Caco-2 (cell line): ENCODE measurements at regions of chr9 and their contacts with region 1.

Region 1: DNA sequence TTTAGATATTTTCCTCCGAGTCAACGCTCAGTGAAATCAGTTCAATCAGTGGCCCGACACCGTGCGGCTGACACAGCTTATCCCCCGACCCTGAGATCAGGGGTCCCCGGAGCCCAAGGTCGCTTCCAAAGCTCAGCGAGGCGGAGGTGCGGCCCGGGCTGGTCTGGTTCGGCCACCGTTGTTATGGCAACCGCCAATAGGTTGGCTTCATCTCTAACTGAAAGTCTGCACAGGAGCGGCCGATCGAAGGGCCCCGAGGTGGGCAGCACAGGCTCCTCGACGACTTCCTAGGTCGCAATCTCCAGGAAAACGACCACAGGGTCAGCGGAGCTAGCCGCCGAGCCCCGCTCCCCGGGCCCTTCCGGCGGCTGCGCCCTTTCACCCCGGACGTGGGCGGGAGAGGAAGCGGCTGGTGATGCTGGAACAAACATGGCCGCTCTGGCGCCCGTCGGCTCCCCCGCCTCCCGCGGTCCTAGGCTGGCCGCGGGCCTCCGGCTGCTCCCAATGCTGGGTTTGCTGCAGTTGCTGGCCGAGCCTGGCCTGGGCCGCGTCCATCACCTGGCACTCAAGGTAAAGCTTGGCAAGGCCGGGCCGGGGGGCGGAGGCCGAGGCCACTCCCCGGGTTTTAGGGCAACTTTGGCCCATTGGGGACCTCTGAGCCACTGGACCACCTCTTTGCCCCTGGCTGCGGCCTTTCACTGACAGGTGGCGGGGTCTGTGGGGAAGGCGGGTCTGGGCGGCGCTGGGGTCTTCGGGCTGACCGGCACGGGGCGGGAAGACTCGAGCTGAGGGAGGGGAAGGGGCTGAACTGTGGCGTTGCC is at the start of gene GPR107:
- DNase-seq: peak; percentile 76 to 84
- H3K4me3 ChIP-seq: peak within 1 kb of the TSS; percentile 75
- H3K4me3 Mint-ChIP-seq: peak within 1 kb of the TSS; percentile 99
- H3K27ac Mint-ChIP-seq: peak within 1 kb of the TSS; percentile 96
- H3K4me1 ChIP-seq: 0 out of 2 replicates have a peak, but pooled peaks cover 3% of the 10 kb centered on the region
- H3K4me1 Mint-ChIP-seq: no peaks in the 10 kb centered on the region
- H3K27me3 ChIP-seq: no peaks in the 10 kb centered on the region
- H3K27me3 Mint-ChIP-seq: no peaks in the 10 kb centered on the region
- CTCF ChIP-seq: no peak
- total RNA-seq, gene GPR107: 49.8 and 53.1 TPM in 2 replicates

Region 2: GRCh38 chr9:129796029-129796910 is 257.4 kb before region 1 on chr9:
- CTCF ChIA-PET with region 1: no interaction called
- POLR2A ChIA-PET with region 1: no interaction called
- intact Hi-C with region 1: no loop called
- DNase-seq: no peak
- H3K4me3 ChIP-seq: no peak overlapping the region
- H3K4me3 Mint-ChIP-seq: no peak overlapping the region
- H3K27ac Mint-ChIP-seq: no peak overlapping the region
- H3K4me1 ChIP-seq: no peaks in the 10 kb centered on the region
- H3K4me1 Mint-ChIP-seq: peaks cover 5% of the 10 kb centered on the region
- H3K27me3 ChIP-seq: no peaks in the 10 kb centered on the region
- H3K27me3 Mint-ChIP-seq: peaks cover 2% of the 10 kb centered on the region
- CTCF ChIP-seq: no peak

Region 3: DNA sequence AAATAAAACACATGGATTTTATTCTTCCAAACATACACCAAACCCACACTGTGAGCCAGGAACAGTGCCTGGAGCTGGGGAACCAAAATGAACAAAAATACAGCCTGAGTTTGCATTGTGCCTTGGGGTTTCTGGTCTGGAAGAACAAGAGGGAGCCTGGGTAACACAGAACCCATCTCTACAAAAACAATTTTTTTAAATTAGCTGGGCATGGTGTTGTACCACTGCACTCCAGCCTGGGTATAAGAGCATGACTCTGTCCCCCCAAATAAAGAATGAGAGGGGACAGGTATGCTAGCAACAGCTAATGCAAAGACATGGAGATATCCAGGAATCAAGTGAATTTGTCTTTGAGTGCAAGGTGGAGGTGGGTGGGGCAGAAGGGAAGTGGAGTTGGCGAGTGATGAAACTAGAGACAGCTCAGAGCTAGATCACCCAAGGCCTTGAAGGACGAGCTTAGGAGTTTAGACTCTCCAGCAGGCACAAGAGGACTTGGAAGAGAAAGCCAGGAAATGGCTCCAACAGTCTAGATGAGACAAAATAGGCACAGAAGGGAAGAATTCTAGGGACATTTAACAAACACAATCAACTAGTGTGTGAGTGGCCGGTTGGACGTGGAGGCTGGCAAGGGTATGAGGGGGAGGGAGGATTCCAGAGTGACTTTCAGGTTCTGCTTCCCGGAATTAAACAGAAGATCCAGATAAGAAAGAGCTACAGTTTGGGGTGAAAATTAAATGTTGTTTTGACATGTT is 58.1 kb before region 1 on chr9:
- CTCF ChIA-PET with region 1: no interaction called
- POLR2A ChIA-PET with region 1: no interaction called
- intact Hi-C with region 1: no loop called
- DNase-seq: no peak
- H3K4me3 ChIP-seq: no peak overlapping the region
- H3K4me3 Mint-ChIP-seq: no peak overlapping the region
- H3K27ac Mint-ChIP-seq: no peak overlapping the region
- H3K4me1 ChIP-seq: no peaks in the 10 kb centered on the region
- H3K4me1 Mint-ChIP-seq: peaks cover 14% of the 10 kb centered on the region
- H3K27me3 ChIP-seq: no peaks in the 10 kb centered on the region
- H3K27me3 Mint-ChIP-seq: no peaks in the 10 kb centered on the region
- CTCF ChIP-seq: no peak

Region 4: DNA sequence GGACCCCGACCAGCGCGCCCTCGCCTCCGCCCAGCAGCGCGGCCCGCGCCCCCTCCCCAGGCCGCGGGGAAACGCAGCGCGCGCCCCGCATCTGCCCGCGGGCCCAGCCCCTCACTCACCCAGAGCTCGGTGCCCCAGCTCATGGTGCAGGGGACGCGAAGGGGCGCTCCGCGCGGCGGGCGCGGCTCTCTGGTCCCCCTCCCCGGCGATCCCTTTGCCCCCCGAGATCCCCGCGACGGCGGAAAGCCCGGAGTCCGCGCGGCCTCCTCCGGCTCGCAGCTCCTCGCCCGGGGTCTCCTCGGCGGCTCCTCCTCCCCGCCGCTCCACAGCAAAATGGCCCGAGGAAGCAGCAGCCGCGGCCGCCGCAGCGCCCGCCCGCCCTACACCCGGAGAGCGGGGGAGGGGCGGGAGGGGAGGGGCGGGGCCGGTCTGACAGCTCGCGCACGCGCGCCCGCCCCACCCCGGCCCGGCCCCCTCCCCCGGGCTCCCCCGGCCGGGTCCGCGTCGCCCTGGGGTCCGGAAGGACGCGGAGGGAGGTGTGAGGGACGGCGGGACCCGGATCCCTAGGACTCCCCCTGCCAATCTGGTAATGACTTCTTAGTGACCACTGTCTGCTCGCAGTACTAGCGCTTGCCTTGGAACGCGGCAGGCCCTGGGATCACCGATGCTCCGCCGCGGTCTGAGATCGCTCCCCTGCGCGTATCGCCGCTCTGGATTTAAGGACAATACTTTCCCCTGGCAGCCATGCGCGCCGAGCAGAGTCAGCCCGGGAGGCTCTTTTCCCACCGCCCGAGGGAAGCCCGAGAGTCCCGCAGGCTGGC is 10.7 kb before region 1 on chr9 and contains the start of gene FNBP1:
- CTCF ChIA-PET with region 1: no interaction called
- POLR2A ChIA-PET with region 1: interaction called, 9 read pairs
- intact Hi-C with region 1: loop called (anchors 1 kb)
- DNase-seq: peak; percentile 82 to 86
- H3K4me3 ChIP-seq: peak within 1 kb of the TSS; percentile 87
- H3K4me3 Mint-ChIP-seq: peak within 1 kb of the TSS; percentile 99
- H3K27ac Mint-ChIP-seq: peak within 1 kb of the TSS; percentile 91
- H3K4me1 ChIP-seq: peaks cover 12% of the 10 kb centered on the region
- H3K4me1 Mint-ChIP-seq: peaks cover 13% of the 10 kb centered on the region
- H3K27me3 ChIP-seq: no peaks in the 10 kb centered on the region
- H3K27me3 Mint-ChIP-seq: no peaks in the 10 kb centered on the region
- CTCF ChIP-seq: no peak
- total RNA-seq, gene FNBP1: 33.2 and 34.3 TPM in 2 replicates

Region 5: DNA sequence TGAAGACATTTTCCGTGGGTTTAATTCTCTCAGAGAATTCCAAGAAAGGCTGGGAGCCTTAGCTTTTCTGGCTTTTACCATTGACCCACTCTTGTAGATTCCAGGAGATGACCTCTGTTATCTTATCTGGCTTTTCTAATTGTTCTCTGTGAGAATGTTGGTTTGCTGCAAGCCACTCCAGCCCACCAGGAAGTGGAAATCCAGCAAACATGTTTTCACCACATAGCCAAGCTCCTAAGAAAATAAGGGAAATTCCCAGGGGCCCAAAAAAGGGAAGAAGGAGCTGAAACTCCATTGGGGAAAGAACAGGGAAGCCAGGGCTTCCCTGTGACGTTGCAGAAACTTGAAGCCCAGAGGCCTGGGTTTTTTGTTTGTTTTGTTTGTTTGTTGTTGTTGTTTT is 19.7 kb after region 1 on chr9:
- CTCF ChIA-PET with region 1: no interaction called
- POLR2A ChIA-PET with region 1: no interaction called
- intact Hi-C with region 1: no loop called
- DNase-seq: peak; percentile 31 to 60
- H3K4me3 ChIP-seq: no peak overlapping the region
- H3K4me3 Mint-ChIP-seq: no peak overlapping the region
- H3K27ac Mint-ChIP-seq: peak overlapping the region; percentile 77
- H3K4me1 ChIP-seq: peaks cover 24% of the 10 kb centered on the region
- H3K4me1 Mint-ChIP-seq: peaks cover 13% of the 10 kb centered on the region
- H3K27me3 ChIP-seq: no peaks in the 10 kb centered on the region
- H3K27me3 Mint-ChIP-seq: no peaks in the 10 kb centered on the region
- CTCF ChIP-seq: no peak